ENCODE measurements at regions of chr21 and their contacts with region 1.

Region 1: DNA sequence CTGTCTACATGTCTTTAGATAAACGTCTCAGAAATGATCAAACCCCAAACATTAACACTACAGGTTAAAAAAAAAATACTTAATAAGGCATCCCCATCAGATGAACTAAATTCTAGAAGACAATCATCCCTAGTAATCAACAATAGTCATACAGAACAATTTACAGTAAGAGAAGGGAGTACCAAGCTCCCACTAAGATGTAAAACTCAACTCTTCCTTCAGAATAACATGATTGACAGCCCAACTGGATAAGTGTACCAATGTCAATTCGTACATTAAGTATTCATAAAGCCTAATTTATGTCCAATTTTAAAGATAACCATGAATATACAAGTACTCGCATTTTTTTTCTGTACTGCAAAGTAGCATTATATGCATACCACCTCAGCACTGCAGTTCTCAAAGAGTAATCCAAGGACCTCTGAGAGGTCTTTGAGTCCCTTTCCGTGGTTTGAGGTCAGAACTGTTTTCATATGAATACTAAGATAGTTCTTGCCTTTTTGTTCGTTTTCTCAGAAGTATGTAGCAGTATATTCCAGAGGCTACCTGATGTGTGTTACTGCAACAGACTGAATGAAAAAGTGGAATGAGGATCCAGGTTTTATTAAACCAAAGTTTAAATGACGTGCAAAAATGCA is 6.6 kb downstream of the SCAF4 start:
- DNase-seq: peak; percentile 39
- ATAC-seq: peak; percentile 88
- H3K4me3 Mint-ChIP-seq: no peak overlapping the region
- H3K27ac Mint-ChIP-seq: peak overlapping the region; percentile 59
- H3K4me1 Mint-ChIP-seq: peaks cover 50% of the 10 kb centered on the region
- H3K27me3 Mint-ChIP-seq: no peaks in the 10 kb centered on the region
- CTCF ChIP-seq: no peak

Region 2: DNA sequence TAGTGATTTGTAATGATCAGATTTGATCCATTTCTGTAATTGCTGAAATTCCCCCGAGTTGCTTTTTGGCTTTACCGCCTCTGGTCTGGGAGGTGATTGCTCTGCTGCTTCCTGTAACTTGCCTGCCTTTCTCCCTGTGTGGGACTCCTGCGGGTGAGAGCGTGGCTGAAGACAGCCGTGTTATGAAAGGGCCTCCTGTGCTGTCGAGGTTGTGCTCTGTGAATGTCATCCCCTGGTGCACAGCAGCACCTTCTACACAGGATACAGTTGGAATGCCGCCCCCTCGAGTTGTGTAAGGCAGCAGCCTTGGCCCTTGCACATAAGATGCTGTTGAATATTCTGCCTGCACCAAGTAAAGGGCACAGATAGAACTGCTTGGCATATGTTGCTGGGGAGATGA is 59.9 kb before region 1 on chr21:
- CTCF ChIA-PET with region 1: no interaction called
- POLR2A ChIA-PET with region 1: no interaction called
- intact Hi-C with region 1: loop called (anchors 5 kb)
- DNase-seq: peak; percentile 67
- ATAC-seq: peak; percentile 68
- H3K4me3 Mint-ChIP-seq: no peak overlapping the region
- H3K27ac Mint-ChIP-seq: peak overlapping the region; percentile 74
- H3K4me1 Mint-ChIP-seq: peaks cover 85% of the 10 kb centered on the region
- H3K27me3 Mint-ChIP-seq: no peaks in the 10 kb centered on the region
- CTCF ChIP-seq: no peak

Region 3: DNA sequence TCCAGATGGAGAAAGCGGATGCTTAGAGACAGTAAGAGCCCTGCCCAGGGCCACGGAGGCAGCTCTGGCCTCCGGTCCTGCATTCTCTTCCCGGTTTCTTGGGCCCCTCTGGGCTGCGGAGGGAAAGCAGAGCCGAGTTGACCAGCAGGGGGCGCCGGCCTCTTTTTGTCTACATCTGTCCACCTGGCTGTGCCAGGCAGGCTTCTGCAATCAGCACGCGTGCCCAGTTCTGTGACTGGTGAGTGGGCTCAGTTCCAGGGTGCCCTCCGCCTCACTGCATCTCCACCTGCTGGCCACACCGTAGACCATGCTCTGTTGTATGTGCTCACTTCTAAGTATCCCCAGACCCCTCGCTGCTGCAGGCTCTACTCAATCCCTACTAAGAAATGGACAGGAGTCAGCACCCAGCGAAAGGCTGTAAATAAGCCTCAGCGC is 140.8 kb after region 1 on chr21:
- CTCF ChIA-PET with region 1: no interaction called
- POLR2A ChIA-PET with region 1: no interaction called
- intact Hi-C with region 1: no loop called
- DNase-seq: peak; percentile 87
- ATAC-seq: peak; percentile 89
- H3K4me3 Mint-ChIP-seq: no peak overlapping the region
- H3K27ac Mint-ChIP-seq: no peak overlapping the region
- H3K4me1 Mint-ChIP-seq: no peaks in the 10 kb centered on the region
- H3K27me3 Mint-ChIP-seq: peaks cover 16% of the 10 kb centered on the region
- CTCF ChIP-seq: peak; percentile 91